GM12878 (cell line): ENCODE measurements at regions of chr6 and their contacts with region 1.

Region 1: DNA sequence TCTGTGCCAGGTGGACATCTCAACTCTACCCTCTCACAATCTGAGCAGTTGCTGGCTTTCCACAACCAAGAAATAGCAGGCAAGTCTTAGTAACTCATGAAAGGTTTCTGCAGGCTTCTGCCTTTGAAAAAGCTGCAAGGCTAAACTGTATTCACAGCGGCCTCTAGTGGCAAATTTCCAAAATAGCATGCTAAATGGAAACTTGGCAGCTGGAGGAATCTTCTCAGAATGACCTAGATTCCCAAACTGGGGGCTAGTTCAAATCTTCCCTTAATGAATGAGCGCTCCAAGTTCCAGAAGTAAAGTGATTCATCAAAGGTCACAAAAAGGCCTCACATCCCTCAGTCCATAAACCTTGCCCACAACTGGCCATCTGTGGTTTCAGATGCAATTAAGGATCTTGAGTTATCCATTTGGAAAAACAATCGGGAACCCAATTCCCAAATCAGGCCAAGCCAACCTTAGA is 11.9 kb upstream of the CPNE5 start:
- DNase-seq: no peak
- ATAC-seq: peak; percentile 46; the same call in 2 of the 3 replicates
- H3K4me3 ChIP-seq: no peak overlapping the region
- H3K27ac ChIP-seq: no peak overlapping the region
- H3K4me1 ChIP-seq: no peaks in the 10 kb centered on the region
- H3K27me3 ChIP-seq: no peaks in the 10 kb centered on the region
- CTCF ChIP-seq: peak; percentile 71 to 79 (median 77)
- EP300 ChIP-seq: no peak
- POLR2A ChIP-seq: no peak
- RAD21 ChIP-seq: peak; percentile 70

Region 2: GRCh38 chr6:36749829-36750489 is 101.2 kb before region 1 on chr6:
- CTCF ChIA-PET with region 1: no interaction called
- POLR2A ChIA-PET with region 1: no interaction called
- RAD21 ChIA-PET with region 1: no interaction called
- SMC1A ChIA-PET with region 1: no interaction called
- in situ Hi-C with region 1: no loop called
- intact Hi-C with region 1: no loop called
- DNase-seq: no peak
- ATAC-seq: no peak
- H3K4me3 ChIP-seq: no peak overlapping the region
- H3K27ac ChIP-seq: no peak overlapping the region
- H3K4me1 ChIP-seq: peaks cover 30% of the 10 kb centered on the region
- H3K27me3 ChIP-seq: no peaks in the 10 kb centered on the region
- CTCF ChIP-seq: no peak
- EP300 ChIP-seq: no peak
- POLR2A ChIP-seq: no peak
- RAD21 ChIP-seq: no peak

Region 3: GRCh38 chr6:36780442-36781177 is 70.6 kb before region 1 on chr6:
- CTCF ChIA-PET with region 1: interaction called, 31 read pairs
- POLR2A ChIA-PET with region 1: no interaction called
- RAD21 ChIA-PET with region 1: interaction called, 4 read pairs
- SMC1A ChIA-PET with region 1: interaction called, 14 read pairs
- in situ Hi-C with region 1: no loop called
- intact Hi-C with region 1: loop called (anchors 5 kb)
- DNase-seq: no peak
- ATAC-seq: no peak
- H3K4me3 ChIP-seq: no peak overlapping the region
- H3K27ac ChIP-seq: no peak overlapping the region
- H3K4me1 ChIP-seq: peaks cover 21% of the 10 kb centered on the region
- H3K27me3 ChIP-seq: peaks cover 0 to 6% of the 10 kb centered on the region in 2 experiments; a peak in 1 of 4 replicates
- CTCF ChIP-seq: no peak
- EP300 ChIP-seq: no peak
- POLR2A ChIP-seq: no peak
- RAD21 ChIP-seq: no peak

Region 4: DNA sequence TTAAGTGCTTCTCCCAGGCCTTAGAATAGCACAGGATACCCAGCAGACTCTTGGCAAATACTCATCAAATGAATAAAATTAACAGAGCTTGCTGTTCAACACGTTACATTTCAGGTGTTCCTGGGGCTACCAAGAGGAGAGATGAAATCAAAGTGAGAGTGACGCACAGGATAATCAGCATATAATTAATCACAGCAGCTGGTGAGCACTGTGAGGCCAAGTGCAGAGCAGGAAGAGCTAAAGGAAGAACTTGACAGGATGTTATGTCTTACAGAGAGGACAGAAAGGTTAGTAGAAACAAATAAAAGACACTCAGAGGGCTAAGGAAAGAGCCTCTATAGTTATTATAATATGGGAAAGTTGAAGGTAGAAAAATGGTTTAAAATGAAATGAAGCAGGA is 14.7 kb after region 1 on chr6:
- CTCF ChIA-PET with region 1: interaction called, 62 read pairs
- POLR2A ChIA-PET with region 1: no interaction called
- RAD21 ChIA-PET with region 1: no interaction called
- SMC1A ChIA-PET with region 1: interaction called, 4 read pairs
- in situ Hi-C with region 1: no loop called
- intact Hi-C with region 1: no loop called
- DNase-seq: no peak
- ATAC-seq: no peak
- H3K4me3 ChIP-seq: no peak overlapping the region
- H3K27ac ChIP-seq: no peak overlapping the region
- H3K4me1 ChIP-seq: no peaks in the 10 kb centered on the region
- H3K27me3 ChIP-seq: no peaks in the 10 kb centered on the region
- CTCF ChIP-seq: no peak
- EP300 ChIP-seq: no peak
- POLR2A ChIP-seq: no peak
- RAD21 ChIP-seq: no peak

Region 5: GRCh38 chr6:36874443-36875249 is 23.5 kb after region 1 on chr6 and contains the start of gene PPIL1:
- CTCF ChIA-PET with region 1: interaction called, 62 read pairs
- POLR2A ChIA-PET with region 1: interaction called, 3 read pairs
- RAD21 ChIA-PET with region 1: no interaction called
- SMC1A ChIA-PET with region 1: interaction called, 9 read pairs
- in situ Hi-C with region 1: no loop called
- intact Hi-C with region 1: no loop called
- DNase-seq: peak; percentile 78
- ATAC-seq: peak; percentile 93
- H3K4me3 ChIP-seq: peak within 1 kb of the TSS; percentile 79
- H3K27ac ChIP-seq: peak within 1 kb of the TSS; percentile 78
- H3K4me1 ChIP-seq: peaks cover 6% of the 10 kb centered on the region; the same call in 1 of the 2 replicates
- H3K27me3 ChIP-seq: no peaks in the 10 kb centered on the region
- CTCF ChIP-seq: no peak
- EP300 ChIP-seq: no peak
- POLR2A ChIP-seq: peak; percentile 81
- RAD21 ChIP-seq: no peak
- polyA plus RNA-seq, gene PPIL1: 74.4 to 95.8 TPM

Region 6: GRCh38 chr6:36885461-36886401 is 34.5 kb after region 1 on chr6 and contains the start of gene C6orf89:
- CTCF ChIA-PET with region 1: interaction called, 14 read pairs
- POLR2A ChIA-PET with region 1: no interaction called
- RAD21 ChIA-PET with region 1: interaction called, 4 read pairs
- SMC1A ChIA-PET with region 1: no interaction called
- in situ Hi-C with region 1: no loop called
- intact Hi-C with region 1: no loop called
- DNase-seq: peak; percentile 92
- ATAC-seq: peak; percentile 98
- H3K4me3 ChIP-seq: peak within 1 kb of the TSS; percentile 99
- H3K27ac ChIP-seq: peak within 1 kb of the TSS; percentile 77
- H3K4me1 ChIP-seq: no peaks in the 10 kb centered on the region
- H3K27me3 ChIP-seq: no peaks in the 10 kb centered on the region
- CTCF ChIP-seq: peak; percentile 72 to 83 (median 79)
- EP300 ChIP-seq: no peak
- POLR2A ChIP-seq: peak; percentile 88
- RAD21 ChIP-seq: peak; percentile 24; the same call in 1 of the 2 replicates
- polyA plus RNA-seq, gene C6orf89: 10.8 to 11.4 TPM